Colonic mucosa (tissue), 4 donors: ENCODE measurements at regions of chr14 and their contacts with region 1.

Region 1: GRCh38 chr14:35814371-35815005 is 5.4 kb upstream of the RALGAPA1 start:
- DNase-seq: peak; percentile 86
- H3K4me3 ChIP-seq: no peak overlapping the region
- H3K27ac ChIP-seq: no peak overlapping the region
- H3K4me1 ChIP-seq: no peaks in the 10 kb centered on the region
- H3K27me3 ChIP-seq: no peaks in the 10 kb centered on the region
- CTCF ChIP-seq: peak; percentile 70

Region 2: GRCh38 chr14:35687335-35687939 is 127.1 kb before region 1 on chr14:
- intact Hi-C with region 1: loop called (anchors 10 kb)
- DNase-seq: peak; percentile 25
- H3K4me3 ChIP-seq: no peak overlapping the region
- H3K27ac ChIP-seq: no peak overlapping the region
- H3K4me1 ChIP-seq: no peaks in the 10 kb centered on the region
- H3K27me3 ChIP-seq: no peaks in the 10 kb centered on the region
- CTCF ChIP-seq: peak; percentile 75

Region 3: DNA sequence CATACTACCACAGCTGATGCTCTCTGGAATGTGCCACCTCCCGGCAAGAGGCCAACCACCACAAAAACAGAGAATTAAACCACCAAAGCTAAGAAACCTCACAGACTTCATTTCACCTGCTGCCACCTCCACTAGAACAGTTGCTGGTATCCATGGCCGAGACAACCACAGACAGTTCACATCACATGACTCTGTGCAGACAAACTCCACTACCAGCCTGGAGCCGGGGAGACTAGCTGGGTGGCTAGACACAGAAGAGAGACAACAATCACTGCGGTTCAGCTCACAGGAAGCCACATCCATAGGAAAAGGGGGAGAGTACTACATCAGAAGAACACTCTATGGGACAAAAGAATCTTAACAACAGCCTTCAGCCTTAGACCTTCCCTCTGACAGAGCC is 83.6 kb before region 1 on chr14:
- intact Hi-C with region 1: loop called (anchors 10 kb)
- DNase-seq: no peak
- H3K4me3 ChIP-seq: no peak overlapping the region
- H3K27ac ChIP-seq: no peak overlapping the region
- H3K4me1 ChIP-seq: no peaks in the 10 kb centered on the region
- H3K27me3 ChIP-seq: no peaks in the 10 kb centered on the region
- CTCF ChIP-seq: no peak

Region 4: DNA sequence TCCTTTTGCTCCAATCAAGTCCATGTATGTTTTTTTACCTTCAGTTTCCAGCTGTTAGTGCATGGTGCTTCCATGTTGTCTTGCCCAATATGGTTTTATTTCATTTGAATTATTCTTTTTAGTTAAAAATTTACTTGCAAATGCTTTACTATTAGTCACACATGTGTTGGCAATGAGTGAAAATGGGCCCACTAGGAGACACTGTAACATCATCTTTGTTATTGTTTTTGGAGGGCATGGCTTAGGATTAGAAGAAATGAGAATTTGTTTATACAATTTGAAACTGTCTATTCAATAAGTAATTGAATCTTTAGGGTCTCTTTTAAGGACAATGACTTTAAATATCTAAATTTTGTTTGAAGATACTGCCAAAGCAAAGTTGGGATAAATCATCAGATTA is 145.3 kb after region 1 on chr14:
- intact Hi-C with region 1: no loop called
- DNase-seq: no peak
- H3K4me3 ChIP-seq: no peak overlapping the region
- H3K27ac ChIP-seq: no peak overlapping the region
- H3K4me1 ChIP-seq: no peaks in the 10 kb centered on the region
- H3K27me3 ChIP-seq: no peaks in the 10 kb centered on the region
- CTCF ChIP-seq: no peak

Region 5: GRCh38 chr14:36238666-36239363 is 424.3 kb after region 1 on chr14:
- intact Hi-C with region 1: no loop called
- DNase-seq: no peak
- H3K4me3 ChIP-seq: no peak overlapping the region
- H3K27ac ChIP-seq: no peak overlapping the region
- H3K4me1 ChIP-seq: no peaks in the 10 kb centered on the region
- H3K27me3 ChIP-seq: no peaks in the 10 kb centered on the region
- CTCF ChIP-seq: no peak

Region 6: GRCh38 chr14:37376944-37377609 is 1562.6 kb after region 1 on chr14:
- intact Hi-C with region 1: no loop called
- DNase-seq: no peak
- H3K4me3 ChIP-seq: no peak overlapping the region
- H3K27ac ChIP-seq: no peak overlapping the region
- H3K4me1 ChIP-seq: no peaks in the 10 kb centered on the region
- H3K27me3 ChIP-seq: no peaks in the 10 kb centered on the region
- CTCF ChIP-seq: no peak